ENCODE measurements at regions of chr7 and their contacts with region 1.

Region 1: DNA sequence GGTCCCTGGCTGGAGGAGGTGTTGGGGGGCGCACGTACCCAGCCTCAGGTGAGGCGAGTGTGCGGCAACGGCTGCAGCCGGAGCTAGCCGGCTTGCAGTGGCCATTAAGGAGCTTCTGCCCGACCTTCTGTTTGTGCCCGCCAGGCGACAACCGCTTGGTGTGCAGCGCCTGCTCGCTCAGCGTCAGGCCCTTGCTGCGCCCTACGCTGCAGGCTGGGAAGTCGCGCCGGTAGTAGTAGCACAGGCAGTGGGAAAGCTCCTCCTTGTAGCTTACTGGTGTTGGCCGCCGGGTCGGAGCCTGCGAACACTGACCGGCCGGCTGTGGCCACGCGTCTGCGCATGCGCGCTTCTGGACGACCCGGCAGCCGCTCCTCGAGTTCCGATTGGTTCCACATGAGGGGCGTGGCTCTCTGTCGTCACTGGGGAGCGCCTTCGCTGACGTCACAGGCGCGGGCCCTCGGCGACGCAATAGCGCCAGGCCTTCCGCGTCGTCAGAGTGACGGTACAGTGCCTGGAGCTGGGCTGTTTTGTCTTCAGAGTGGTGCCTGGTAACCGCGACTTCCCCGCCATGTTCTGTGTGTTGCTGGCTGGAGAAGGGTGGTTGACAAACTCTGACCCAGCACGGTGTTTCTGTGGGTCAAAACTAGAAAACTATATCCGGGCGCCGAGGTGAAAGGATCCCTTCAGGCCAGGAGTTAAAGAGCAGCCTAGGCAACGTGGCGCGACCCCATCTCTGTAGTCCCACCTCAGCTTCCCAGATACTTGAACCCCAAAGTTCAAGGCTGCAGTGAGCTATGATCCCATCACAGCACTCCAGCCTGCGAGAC is 76.3 kb upstream of the TMEM248 start:
- DNase-seq: peak; percentile 93 to 98 (median 96)
- H3K4me3 ChIP-seq: peak overlapping the region; percentile 40 to 100 (median 91)
- H3K27ac ChIP-seq: peak overlapping the region; percentile 10 to 98 (median 90)
- H3K27me3 ChIP-seq: no peaks in the 10 kb centered on the region
- CTCF ChIP-seq: peak in 37 of 56 donors; percentile 10 to 53 (median 35)

Region 2: GRCh38 chr7:66557608-66558143 is 287.1 kb before region 1 on chr7:
- intact Hi-C with region 1: loop called in 1 of 2 experiments (anchors 10 kb)
- DNase-seq: peak; percentile 69 to 85 (median 74)
- H3K4me3 ChIP-seq: peak overlapping the region in 43 of 59 donors; percentile 2 to 51 (median 30)
- H3K27ac ChIP-seq: peak overlapping the region in 30 of 59 donors; percentile 13 to 81 (median 44)
- H3K27me3 ChIP-seq: no peaks in the 10 kb centered on the region
- CTCF ChIP-seq: peak; percentile 72 to 97 (median 92)

Region 3: DNA sequence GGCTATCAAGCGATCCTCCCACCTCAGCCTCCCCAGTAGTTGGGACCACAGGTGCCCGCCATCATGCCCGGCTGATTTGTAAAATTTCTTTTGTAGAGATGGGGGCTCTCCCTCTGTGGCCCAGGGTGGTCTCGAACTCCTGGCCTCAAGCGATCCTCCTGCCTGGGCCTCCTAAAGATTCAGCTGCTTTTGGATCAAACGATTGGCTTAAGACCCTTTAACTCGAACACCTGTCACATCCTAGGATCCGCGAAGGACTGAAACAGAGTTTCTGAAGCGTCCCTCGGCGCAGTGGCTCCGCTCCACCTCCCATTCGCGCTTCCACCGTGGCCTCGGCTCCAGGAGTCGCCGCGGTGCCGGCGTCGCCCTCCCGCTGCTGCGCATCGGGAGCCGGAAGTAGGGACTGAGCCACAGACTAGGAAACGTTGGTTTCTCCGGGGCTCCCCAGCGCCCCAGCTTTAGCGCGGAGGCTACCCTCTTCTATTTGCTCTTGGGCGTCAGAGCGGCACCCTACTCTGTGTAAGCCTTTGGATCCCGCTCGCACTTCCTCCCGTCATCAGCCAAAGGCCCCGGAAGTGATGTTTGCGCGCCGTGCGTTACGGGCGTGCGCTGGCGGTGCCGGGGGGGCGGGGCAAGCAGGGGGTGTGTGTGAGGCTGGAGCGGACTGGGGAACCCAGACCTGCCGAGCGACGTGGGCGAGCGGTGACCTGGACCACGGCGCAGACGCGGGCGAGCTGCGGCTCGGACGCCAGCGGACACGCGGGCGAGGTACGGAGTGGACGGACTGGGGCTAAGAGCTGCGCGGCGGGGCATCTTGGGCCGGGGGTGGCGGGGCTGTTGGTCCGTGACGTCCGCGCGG is 163.0 kb before region 1 on chr7:
- intact Hi-C with region 1: loop called in 1 of 2 experiments (anchors 5 kb)
- DNase-seq: peak; percentile 92 to 98 (median 96)
- H3K4me3 ChIP-seq: peak overlapping the region; percentile 71 to 99 (median 94)
- H3K27ac ChIP-seq: peak overlapping the region; percentile 43 to 99 (median 96)
- H3K27me3 ChIP-seq: no peaks in the 10 kb centered on the region
- CTCF ChIP-seq: peak in 10 of 56 donors; percentile 9 to 30 (median 14)

Region 4: DNA sequence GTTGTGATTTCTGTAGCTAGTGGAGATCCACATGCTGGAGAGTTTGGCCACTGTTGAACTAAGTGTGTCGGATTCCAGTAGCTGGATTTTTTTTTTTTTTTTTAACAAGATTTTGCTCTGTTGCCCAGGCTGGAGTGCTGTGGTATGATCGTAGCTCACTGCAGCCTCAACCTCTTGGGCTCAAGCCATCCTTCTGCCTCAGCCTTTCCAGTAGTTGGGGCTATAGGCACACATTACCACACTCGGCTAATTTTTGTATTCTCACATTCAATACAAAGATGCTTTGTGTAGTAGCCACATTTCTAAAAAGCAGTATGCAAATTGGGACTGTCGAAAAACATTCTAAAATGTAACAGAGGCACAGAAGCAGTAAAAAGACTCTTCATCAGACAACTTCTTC is 40.8 kb before region 1 on chr7:
- intact Hi-C with region 1: loop called in 1 of 2 experiments (anchors 5 kb)
- DNase-seq: peak in 8 of 10 donors; percentile 35 to 71 (median 58)
- H3K4me3 ChIP-seq: peak overlapping the region in 7 of 59 donors; percentile 7 to 33 (median 17)
- H3K27ac ChIP-seq: peak overlapping the region in 49 of 59 donors; percentile 26 to 90 (median 78)
- H3K27me3 ChIP-seq: no peaks in the 10 kb centered on the region
- CTCF ChIP-seq: peak in 52 of 56 donors; percentile 12 to 73 (median 48)

Region 5: DNA sequence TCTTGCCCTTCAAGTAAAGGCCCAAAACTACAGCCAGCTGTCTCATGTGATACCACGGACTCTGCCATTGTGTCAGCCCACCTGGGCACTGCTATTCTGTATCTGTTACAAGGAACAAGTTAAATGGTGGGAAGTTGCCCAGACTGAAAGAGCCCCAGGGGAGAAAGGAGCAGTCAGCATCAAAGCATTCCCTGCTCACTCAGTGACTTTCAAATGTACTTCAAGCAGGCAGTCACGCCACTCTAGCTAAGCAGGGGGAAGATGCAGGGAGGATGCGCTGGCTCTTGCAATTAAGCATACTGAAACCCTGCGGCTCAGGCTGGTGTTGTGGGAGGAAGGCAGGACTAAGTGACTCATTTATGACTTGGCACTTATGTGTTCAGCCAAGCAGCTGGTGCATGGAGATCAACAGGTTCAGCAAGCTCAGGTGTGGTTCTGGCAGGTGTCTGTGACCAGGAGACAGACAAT is 1401.5 kb after region 1 on chr7:
- intact Hi-C with region 1: no loop called
- DNase-seq: peak in 7 of 10 donors; percentile 4 to 73 (median 57)
- H3K4me3 ChIP-seq: no peak overlapping the region
- H3K27ac ChIP-seq: peak overlapping the region in 16 of 59 donors; percentile 10 to 68 (median 45)
- H3K27me3 ChIP-seq: peaks cover 0 to 9% (median 0%) of the 10 kb centered on the region in 45 donors
- CTCF ChIP-seq: no peak

Measured in dorsolateral prefrontal cortex (tissue), 120 donors.